ENCODE measurements at regions of chr18 and their contacts with region 1.

Region 1: GRCh38 chr18:6979954-6980353 is 137.6 kb downstream of the LAMA1 start:
- DNase-seq: no peak
- ATAC-seq: no peak
- H3K4me3 Mint-ChIP-seq: no peak overlapping the region
- H3K27ac Mint-ChIP-seq: no peak overlapping the region
- H3K4me1 Mint-ChIP-seq: no peaks in the 10 kb centered on the region
- H3K27me3 Mint-ChIP-seq: no peaks in the 10 kb centered on the region
- CTCF ChIP-seq: no peak

Region 2: GRCh38 chr18:6633310-6633709 is 346.6 kb before region 1 on chr18:
- CTCF ChIA-PET with region 1: no interaction called
- POLR2A ChIA-PET with region 1: no interaction called
- intact Hi-C with region 1: no loop called
- DNase-seq: no peak
- ATAC-seq: no peak
- H3K4me3 Mint-ChIP-seq: no peak overlapping the region
- H3K27ac Mint-ChIP-seq: no peak overlapping the region
- H3K4me1 Mint-ChIP-seq: no peaks in the 10 kb centered on the region
- H3K27me3 Mint-ChIP-seq: no peaks in the 10 kb centered on the region
- CTCF ChIP-seq: no peak

Region 3: DNA sequence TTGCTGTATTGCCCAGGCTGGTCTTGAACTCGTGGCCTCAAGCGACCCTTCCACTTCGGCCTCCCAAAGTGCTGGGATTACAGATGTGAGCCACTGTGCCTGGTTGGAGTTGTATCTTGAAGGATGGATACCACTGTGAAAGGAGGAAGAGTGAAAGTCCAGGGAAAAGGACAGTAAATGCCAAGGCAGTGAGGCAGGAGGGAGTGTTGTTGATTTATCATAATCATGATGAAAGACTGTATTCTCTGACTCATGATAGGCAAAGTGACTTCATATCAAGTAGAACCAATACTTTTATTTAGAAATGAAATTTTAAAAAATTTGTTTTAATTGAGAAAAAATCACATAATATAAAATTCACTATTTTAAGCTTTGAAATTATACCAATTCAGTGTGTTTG is 88.2 kb before region 1 on chr18:
- CTCF ChIA-PET with region 1: no interaction called
- POLR2A ChIA-PET with region 1: no interaction called
- intact Hi-C with region 1: no loop called
- DNase-seq: no peak
- ATAC-seq: no peak
- H3K4me3 Mint-ChIP-seq: no peak overlapping the region
- H3K27ac Mint-ChIP-seq: no peak overlapping the region
- H3K4me1 Mint-ChIP-seq: no peaks in the 10 kb centered on the region
- H3K27me3 Mint-ChIP-seq: no peaks in the 10 kb centered on the region
- CTCF ChIP-seq: no peak

Region 4: GRCh38 chr18:7021994-7022840 is 42.3 kb after region 1 on chr18:
- CTCF ChIA-PET with region 1: no interaction called
- POLR2A ChIA-PET with region 1: no interaction called
- intact Hi-C with region 1: loop called (anchors 10 kb)
- DNase-seq: peak; percentile 32
- ATAC-seq: no peak
- H3K4me3 Mint-ChIP-seq: no peak overlapping the region
- H3K27ac Mint-ChIP-seq: no peak overlapping the region
- H3K4me1 Mint-ChIP-seq: no peaks in the 10 kb centered on the region
- H3K27me3 Mint-ChIP-seq: no peaks in the 10 kb centered on the region
- CTCF ChIP-seq: no peak